HEK293 (cell line): ENCODE measurements at regions of chr19 and their contacts with region 1.

Region 1: GRCh38 chr19:23395041-23395721 is at the start of gene ZNF91:
- H3K4me3 ChIP-seq: peak within 1 kb of the TSS; percentile 99
- H3K27ac ChIP-seq: peak within 1 kb of the TSS; percentile 38
- H3K4me1 ChIP-seq: no peaks in the 10 kb centered on the region
- CTCF ChIP-seq: no peak

Region 2: DNA sequence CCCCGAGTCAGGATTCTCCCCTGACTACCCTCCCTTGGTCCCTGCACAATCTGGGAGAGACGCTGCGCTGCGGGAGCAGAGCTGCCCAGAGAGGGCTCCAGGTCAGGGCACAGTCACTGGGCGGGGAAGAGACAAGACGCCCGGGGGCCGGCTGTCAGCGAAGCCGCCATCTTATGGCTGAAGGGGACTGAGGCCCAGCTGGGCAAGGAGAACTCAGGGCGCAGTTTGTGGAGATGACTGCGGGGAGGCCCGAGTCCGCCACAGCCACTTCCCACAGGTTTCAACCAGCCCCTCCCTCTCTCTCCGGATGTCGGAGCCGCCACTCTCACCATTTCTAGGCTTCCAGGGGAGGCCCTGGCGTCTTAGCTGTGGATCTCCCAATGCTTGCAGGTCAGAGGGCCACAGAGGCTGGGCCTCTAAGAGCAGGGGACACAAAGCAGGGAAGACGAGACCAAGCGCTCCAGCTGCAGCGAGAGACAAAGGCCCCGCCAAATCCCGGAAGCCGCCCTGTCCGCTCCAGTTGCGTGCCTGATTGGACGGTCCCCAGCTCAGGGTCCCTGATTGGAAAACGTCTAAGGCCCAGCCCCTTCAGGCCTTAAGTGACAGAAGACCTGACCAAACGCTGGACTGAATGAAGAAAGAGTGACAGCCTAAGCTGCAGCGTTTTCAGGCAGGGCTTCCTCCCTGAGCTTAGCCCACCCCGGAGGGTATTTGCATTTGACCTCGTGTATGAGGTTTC is 145.1 kb before region 1 on chr19 and contains the start of gene ZNF724:
- CTCF ChIA-PET with region 1: no interaction called
- POLR2A ChIA-PET with region 1: interaction called, 11 read pairs
- H3K4me3 ChIP-seq: peak within 1 kb of the TSS; percentile 92
- H3K27ac ChIP-seq: peak within 1 kb of the TSS; percentile 85
- H3K4me1 ChIP-seq: no peaks in the 10 kb centered on the region
- CTCF ChIP-seq: no peak

Region 3: GRCh38 chr19:23273590-23274413 is 121.4 kb before region 1 on chr19:
- CTCF ChIA-PET with region 1: no interaction called
- POLR2A ChIA-PET with region 1: interaction called, 14 read pairs
- H3K4me3 ChIP-seq: peak overlapping the region; percentile 87
- H3K27ac ChIP-seq: peak overlapping the region; percentile 87
- H3K4me1 ChIP-seq: no peaks in the 10 kb centered on the region
- CTCF ChIP-seq: 0 out of 2 replicates have a peak, but pooled peaks have one; percentile 9

Region 4: DNA sequence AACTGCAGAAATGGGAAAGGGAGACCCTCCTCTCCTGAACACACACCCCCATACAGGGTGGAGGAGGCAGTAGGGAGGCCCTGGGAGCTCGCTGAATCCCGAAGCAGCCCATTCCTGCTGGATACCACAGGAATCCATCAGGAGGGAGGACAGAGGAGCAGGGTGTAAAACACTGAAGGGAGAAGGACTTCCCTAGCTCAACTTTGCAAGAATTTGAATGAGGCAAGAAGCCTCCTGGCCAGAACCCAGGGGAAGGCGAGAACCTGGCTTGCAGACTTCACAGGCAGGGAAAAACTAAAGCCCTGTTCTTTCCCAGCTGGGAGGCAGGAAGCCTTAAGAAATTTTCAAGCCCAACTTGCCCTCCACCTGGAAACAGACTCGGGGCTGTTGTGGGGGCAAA is 43.4 kb before region 1 on chr19:
- CTCF ChIA-PET with region 1: no interaction called
- POLR2A ChIA-PET with region 1: no interaction called
- H3K4me3 ChIP-seq: no peak overlapping the region
- H3K27ac ChIP-seq: no peak overlapping the region
- H3K4me1 ChIP-seq: no peaks in the 10 kb centered on the region
- CTCF ChIP-seq: no peak

Region 5: GRCh38 chr19:23415561-23416191 is 20.5 kb after region 1 on chr19:
- CTCF ChIA-PET with region 1: interaction called, 3 read pairs
- POLR2A ChIA-PET with region 1: interaction called, 11 read pairs
- H3K4me3 ChIP-seq: peak overlapping the region; percentile 58
- H3K27ac ChIP-seq: no peak overlapping the region
- H3K4me1 ChIP-seq: no peaks in the 10 kb centered on the region
- CTCF ChIP-seq: no peak